Spleen (tissue), 13 donors: ENCODE measurements at regions of chr18 and their contacts with region 1.

Region 1: GRCh38 chr18:32018331-32019250 is at the start of gene RNF125:
- DNase-seq: peak; percentile 97
- H3K4me3 ChIP-seq: peak within 1 kb of the TSS; percentile 50 to 89 (median 72)
- H3K27ac ChIP-seq: peak within 1 kb of the TSS; percentile 66 to 97 (median 86)
- H3K4me1 ChIP-seq: peaks cover 10 to 68% (median 44%) of the 10 kb centered on the region in 6 donors
- H3K27me3 ChIP-seq: no peaks in the 10 kb centered on the region
- CTCF ChIP-seq: peak in 6 of 11 experiments; percentile 18 to 39 (median 30)
- POLR2A ChIP-seq: peak in 2 of 3 donors; percentile 14 to 64
- total RNA-seq, gene RNF125: 7.2 to 12.9 (median 10.6) TPM

Region 2: GRCh38 chr18:30578707-30579106 is 1439.9 kb before region 1 on chr18:
- intact Hi-C with region 1: no loop called
- DNase-seq: no peak
- H3K4me3 ChIP-seq: no peak overlapping the region
- H3K27ac ChIP-seq: no peak overlapping the region
- H3K4me1 ChIP-seq: no peaks in the 10 kb centered on the region
- H3K27me3 ChIP-seq: no peaks in the 10 kb centered on the region
- CTCF ChIP-seq: no peak
- POLR2A ChIP-seq: no peak

Region 3: DNA sequence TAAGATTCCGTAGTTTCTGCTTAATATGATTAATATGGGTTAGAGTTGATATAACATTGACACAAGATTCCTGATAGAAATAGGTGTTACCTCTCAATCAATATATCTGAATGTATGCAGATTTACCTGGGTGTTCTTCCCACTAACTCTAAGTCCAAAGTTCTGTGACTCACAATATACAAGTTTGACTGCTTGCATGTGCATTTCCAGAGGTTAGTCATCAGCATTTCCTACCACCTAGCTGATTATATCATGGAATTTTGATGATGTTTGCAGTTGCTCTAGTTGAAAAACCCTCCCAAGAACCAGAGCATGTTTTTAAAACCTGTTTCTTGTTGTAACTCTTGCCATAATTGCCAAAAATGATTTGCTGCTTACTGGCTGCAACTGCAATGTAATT is 715.6 kb before region 1 on chr18:
- intact Hi-C with region 1: no loop called
- DNase-seq: no peak
- H3K4me3 ChIP-seq: no peak overlapping the region
- H3K27ac ChIP-seq: no peak overlapping the region
- H3K4me1 ChIP-seq: no peaks in the 10 kb centered on the region
- H3K27me3 ChIP-seq: no peaks in the 10 kb centered on the region
- CTCF ChIP-seq: no peak
- POLR2A ChIP-seq: no peak

Region 4: GRCh38 chr18:31965316-31965970 is 53.1 kb before region 1 on chr18:
- intact Hi-C with region 1: no loop called
- DNase-seq: no peak
- H3K4me3 ChIP-seq: no peak overlapping the region
- H3K27ac ChIP-seq: no peak overlapping the region
- H3K4me1 ChIP-seq: no peaks in the 10 kb centered on the region
- H3K27me3 ChIP-seq: no peaks in the 10 kb centered on the region
- CTCF ChIP-seq: no peak
- POLR2A ChIP-seq: no peak

Region 5: GRCh38 chr18:32060026-32060425 is 41.4 kb after region 1 on chr18:
- intact Hi-C with region 1: loop called (anchors 10 kb)
- DNase-seq: no peak
- H3K4me3 ChIP-seq: no peak overlapping the region
- H3K27ac ChIP-seq: no peak overlapping the region
- H3K4me1 ChIP-seq: no peaks in the 10 kb centered on the region
- H3K27me3 ChIP-seq: no peaks in the 10 kb centered on the region
- CTCF ChIP-seq: no peak
- POLR2A ChIP-seq: no peak